Common myeloid progenitor, CD34-positive (primary cell): ENCODE measurements at regions of chr11 and their contacts with region 1.

Region 1: DNA sequence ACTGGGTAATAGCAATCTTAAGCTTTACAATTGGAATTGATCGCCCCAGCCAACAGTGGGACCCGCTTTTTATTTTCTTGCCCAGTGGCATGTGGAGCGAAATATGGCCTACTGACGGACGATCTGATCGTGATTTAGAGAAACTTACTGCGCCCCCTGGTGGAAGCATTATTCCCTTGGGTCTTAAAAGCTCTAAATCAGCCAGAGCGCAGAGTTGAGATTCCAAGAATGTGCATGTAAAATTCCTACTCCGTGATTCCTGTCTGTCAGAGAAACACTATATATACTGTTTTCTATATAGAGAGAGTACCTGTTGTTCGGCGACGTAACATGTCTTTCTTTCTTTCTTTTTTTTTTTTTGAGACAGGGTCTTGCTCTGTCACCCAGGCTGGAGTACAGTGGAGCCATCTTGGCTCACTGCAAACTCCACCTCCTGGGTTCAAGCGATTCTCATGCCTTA is 3.7 kb upstream of the DPF2 start:
- DNase-seq: peak; percentile 92 to 96 (median 93)
- H3K4me3 ChIP-seq: peak overlapping the region in 5 of 7 experiments; percentile 2 to 54 (median 35)
- H3K27ac ChIP-seq: peak overlapping the region in 1 of 2 experiments; percentile 46
- H3K4me1 ChIP-seq: peaks cover 8 to 16% (median 15%) of the 10 kb centered on the region in 4 experiments
- H3K27me3 ChIP-seq: no peaks in the 10 kb centered on the region

Region 2: GRCh38 chr11:65274735-65275682 is 55.0 kb before region 1 on chr11:
- CTCF ChIA-PET with region 1: interaction called, 284 read pairs
- POLR2A ChIA-PET with region 1: interaction called, 5 read pairs
- DNase-seq: peak; percentile 68 to 86 (median 76)
- H3K4me3 ChIP-seq: no peak overlapping the region
- H3K27ac ChIP-seq: no peak overlapping the region
- H3K4me1 ChIP-seq: no peaks in the 10 kb centered on the region
- H3K27me3 ChIP-seq: no peaks in the 10 kb centered on the region

Region 3: DNA sequence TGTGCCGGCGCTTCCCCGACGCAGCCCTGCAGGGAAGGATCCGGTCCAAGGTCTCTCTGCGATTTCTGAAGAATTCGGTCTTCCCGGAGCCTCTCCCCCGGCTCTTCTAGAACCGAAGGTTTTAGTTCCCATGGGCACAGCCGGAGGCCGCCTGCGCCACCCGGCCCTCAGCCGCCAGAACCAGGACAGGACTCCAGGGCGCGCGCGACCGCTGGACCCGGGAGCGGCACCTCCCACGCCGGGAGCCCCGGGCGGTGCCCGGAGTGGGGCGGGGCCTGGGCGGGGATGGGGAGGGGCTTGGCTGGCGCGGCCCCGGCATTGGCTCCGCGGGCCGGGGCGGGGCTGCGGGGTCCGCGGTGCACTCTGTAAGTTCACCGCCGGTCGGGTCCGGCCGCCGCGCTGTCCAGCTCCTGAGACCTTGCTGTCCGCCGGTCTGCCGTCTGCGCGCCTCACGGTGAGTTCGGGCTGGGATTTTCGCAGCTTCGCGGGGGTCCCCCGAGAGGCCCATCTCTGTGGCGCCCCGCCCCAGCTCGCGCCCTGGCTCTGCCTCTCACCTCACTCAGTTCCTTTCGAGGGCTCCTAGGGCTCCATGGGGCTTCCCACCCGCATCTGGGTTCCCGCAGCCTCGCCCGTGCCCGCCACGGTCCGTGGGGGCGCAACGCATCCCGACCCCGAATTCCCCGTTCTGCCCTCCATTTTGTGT is 15.3 kb before region 1 on chr11 and contains the start of gene CDC42EP2:
- CTCF ChIA-PET with region 1: interaction called, 153 read pairs
- POLR2A ChIA-PET with region 1: interaction called, 4 read pairs
- DNase-seq: peak; percentile 45 to 48 (median 47)
- H3K4me3 ChIP-seq: peak within 1 kb of the TSS; percentile 56 to 84 (median 81)
- H3K27ac ChIP-seq: peak within 1 kb of the TSS in 1 of 2 experiments; percentile 25
- H3K4me1 ChIP-seq: peaks cover 0 to 22% (median 12%) of the 10 kb centered on the region in 4 experiments
- H3K27me3 ChIP-seq: peaks cover 0 to 11% (median 0%) of the 10 kb centered on the region in 5 experiments

Region 4: DNA sequence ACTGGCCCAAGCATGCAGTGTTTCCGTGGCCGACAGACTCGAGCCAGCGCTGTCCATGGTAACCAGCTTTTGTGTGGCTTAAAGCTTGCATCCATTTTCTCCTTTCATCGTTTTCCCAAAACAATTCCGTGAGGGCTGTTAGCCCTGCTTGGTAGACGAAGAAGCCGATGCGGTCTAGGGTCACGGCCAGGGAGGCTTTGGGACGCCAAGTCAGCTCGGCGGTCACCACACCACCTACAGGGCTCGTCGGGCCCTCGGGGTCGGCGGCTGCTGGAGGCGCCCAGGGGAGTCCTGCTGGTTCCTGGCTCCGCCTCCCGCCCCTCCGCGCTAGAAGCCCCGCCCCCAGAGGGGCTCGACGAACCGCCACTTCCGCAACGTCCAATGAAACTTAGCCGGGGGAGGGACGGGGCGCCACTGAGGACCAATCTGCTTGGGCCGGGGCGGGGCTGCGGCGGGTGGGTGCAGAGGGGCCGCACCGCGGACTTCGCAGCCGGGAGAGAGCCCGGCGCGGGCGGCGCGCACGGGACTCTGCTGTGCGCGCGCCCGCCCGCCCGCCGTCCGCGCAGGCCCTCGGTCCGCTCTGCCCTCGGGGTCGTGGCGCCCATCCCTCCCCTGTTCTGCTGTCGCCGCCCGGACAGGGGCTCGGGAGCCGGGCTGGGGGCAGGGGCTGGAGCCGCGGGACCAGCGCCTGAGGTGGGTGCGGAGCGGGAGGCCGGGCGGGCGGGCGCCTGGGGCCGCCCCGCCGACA is 24.5 kb after region 1 on chr11 and contains the start of gene TIGD3:
- CTCF ChIA-PET with region 1: interaction called, 61 read pairs
- POLR2A ChIA-PET with region 1: interaction called, 5 read pairs
- DNase-seq: peak; percentile 95 to 98 (median 98)
- H3K4me3 ChIP-seq: peak within 1 kb of the TSS; percentile 62 to 84 (median 68)
- H3K27ac ChIP-seq: no peak within 1 kb of the TSS
- H3K4me1 ChIP-seq: peaks cover 0 to 25% (median 23%) of the 10 kb centered on the region in 4 experiments
- H3K27me3 ChIP-seq: peaks cover 0 to 2% (median 0%) of the 10 kb centered on the region in 5 experiments

Region 5: GRCh38 chr11:65454696-65455456 is 124.9 kb after region 1 on chr11:
- CTCF ChIA-PET with region 1: no interaction called
- POLR2A ChIA-PET with region 1: no interaction called
- DNase-seq: peak; percentile 66 to 79 (median 74)
- H3K4me3 ChIP-seq: peak overlapping the region; percentile 64 to 85 (median 74)
- H3K27ac ChIP-seq: peak overlapping the region; percentile 40 to 70
- H3K4me1 ChIP-seq: peaks cover 0 to 17% (median 12%) of the 10 kb centered on the region in 4 experiments
- H3K27me3 ChIP-seq: no peaks in the 10 kb centered on the region